Posterior vena cava (tissue), 2 donors: ENCODE measurements at regions of chr3 and their contacts with region 1.

Region 1: DNA sequence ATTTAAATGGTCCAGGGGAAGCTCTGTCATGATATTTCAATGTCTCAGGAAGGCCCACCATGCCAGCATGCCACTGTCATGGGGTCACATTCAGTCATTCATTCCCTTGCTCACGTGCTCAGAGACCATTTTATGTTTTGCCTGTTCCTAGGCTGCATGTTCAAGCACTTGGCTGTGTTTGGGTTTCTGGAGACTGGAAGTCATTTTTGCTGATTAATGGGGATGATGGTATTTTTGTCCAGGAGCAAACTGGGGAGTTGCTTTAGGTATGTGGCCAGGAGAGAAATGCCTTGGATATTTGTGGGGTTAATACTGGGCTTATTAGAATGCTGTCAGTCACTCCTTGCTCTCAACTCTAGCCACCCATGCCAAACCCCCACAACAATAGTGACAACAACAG is 303.5 kb downstream of the PTPRG start:
- DNase-seq: no peak

Region 2: DNA sequence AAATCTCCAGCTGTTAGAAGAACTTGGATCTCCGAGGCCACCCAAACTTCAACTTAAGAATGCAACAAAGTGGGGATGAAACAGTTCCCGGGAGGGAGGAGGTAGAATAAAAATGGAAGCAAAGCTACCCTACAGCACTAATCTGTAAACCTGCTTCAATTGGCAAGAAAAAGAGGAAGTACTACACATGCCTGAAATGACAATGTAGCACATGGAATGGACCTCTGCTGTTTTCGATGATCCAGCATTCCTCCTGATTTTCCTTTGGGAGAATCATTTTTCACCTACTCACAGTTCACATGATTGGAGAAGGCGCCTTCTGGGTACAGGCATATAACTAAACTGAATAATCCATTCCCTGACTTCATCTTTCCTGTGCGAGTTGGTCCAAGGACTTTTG is 1695.1 kb before region 1 on chr3:
- intact Hi-C with region 1: no loop called
- DNase-seq: no peak

Region 3: GRCh38 chr3:61807865-61808276 is 57.0 kb before region 1 on chr3:
- intact Hi-C with region 1: no loop called
- DNase-seq: no peak

Region 4: GRCh38 chr3:62188681-62189383 is 323.9 kb after region 1 on chr3:
- intact Hi-C with region 1: loop called (anchors 10 kb)
- DNase-seq: peak; percentile 90